MCF 10A (cell line): ENCODE measurements at regions of chr6 and their contacts with region 1.

Region 1: GRCh38 chr6:20564269-20564668 is 30.0 kb downstream of the CDKAL1 start:
- DNase-seq: peak; percentile 17
- H3K4me3 Mint-ChIP-seq: no peak overlapping the region
- H3K27ac Mint-ChIP-seq: no peak overlapping the region
- H3K4me1 Mint-ChIP-seq: peaks cover 14% of the 10 kb centered on the region
- H3K27me3 Mint-ChIP-seq: no peaks in the 10 kb centered on the region
- CTCF ChIP-seq: peak; percentile 34

Region 2: GRCh38 chr6:20582586-20583446 is 18.5 kb after region 1 on chr6:
- CTCF ChIA-PET with region 1: no interaction called
- POLR2A ChIA-PET with region 1: no interaction called
- intact Hi-C with region 1: no loop called
- DNase-seq: no peak
- H3K4me3 Mint-ChIP-seq: no peak overlapping the region
- H3K27ac Mint-ChIP-seq: no peak overlapping the region
- H3K4me1 Mint-ChIP-seq: no peaks in the 10 kb centered on the region
- H3K27me3 Mint-ChIP-seq: no peaks in the 10 kb centered on the region
- CTCF ChIP-seq: no peak

Region 3: GRCh38 chr6:20877008-20877937 is 313.0 kb after region 1 on chr6:
- CTCF ChIA-PET with region 1: interaction called, 5 read pairs
- POLR2A ChIA-PET with region 1: no interaction called
- intact Hi-C with region 1: loop called (anchors 2 kb)
- DNase-seq: peak; percentile 89
- H3K4me3 Mint-ChIP-seq: peak overlapping the region; percentile 5
- H3K27ac Mint-ChIP-seq: peak overlapping the region; percentile 78
- H3K4me1 Mint-ChIP-seq: peaks cover 23% of the 10 kb centered on the region
- H3K27me3 Mint-ChIP-seq: no peaks in the 10 kb centered on the region
- CTCF ChIP-seq: no peak

Region 4: DNA sequence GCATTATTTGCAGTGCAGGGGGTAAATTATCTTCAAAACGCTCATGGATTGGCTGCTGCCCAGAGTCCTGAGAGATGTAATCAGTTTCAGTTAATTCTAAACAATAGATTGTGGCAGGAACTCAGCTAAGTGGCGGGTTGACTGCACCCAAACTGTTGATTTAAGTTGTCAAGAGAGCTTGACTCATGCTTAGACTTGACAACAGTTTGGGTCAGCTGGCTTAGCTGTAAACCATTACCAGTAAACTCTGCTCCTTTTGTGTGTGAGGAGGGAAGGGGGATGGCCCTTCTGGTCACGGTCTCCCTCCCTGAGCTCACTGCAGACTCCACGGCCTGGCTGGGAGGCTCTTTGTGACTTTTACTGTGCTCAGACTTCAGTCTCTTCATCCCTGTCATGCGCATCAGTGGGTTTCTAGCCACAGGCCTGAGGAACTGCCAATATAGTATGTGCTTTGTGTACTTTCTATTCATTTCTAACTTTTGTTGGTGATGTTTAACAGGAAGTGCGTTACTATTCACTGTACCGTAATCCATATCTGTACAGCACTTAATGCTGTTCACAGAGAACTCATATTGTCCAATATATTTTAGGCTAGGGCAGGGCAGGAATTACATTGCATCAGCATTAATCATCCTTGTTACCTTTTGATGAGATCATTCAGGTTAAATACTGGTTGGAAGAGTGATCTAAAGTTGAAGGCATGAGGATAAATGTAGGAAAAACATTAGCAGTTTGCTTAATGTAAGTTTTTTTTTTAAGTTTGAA is 458.3 kb after region 1 on chr6:
- CTCF ChIA-PET with region 1: interaction called, 3 read pairs
- POLR2A ChIA-PET with region 1: no interaction called
- intact Hi-C with region 1: loop called (anchors 10 kb)
- DNase-seq: peak; percentile 69
- H3K4me3 Mint-ChIP-seq: peak overlapping the region; percentile 43
- H3K27ac Mint-ChIP-seq: peak overlapping the region; percentile 96
- H3K4me1 Mint-ChIP-seq: peaks cover 32% of the 10 kb centered on the region
- H3K27me3 Mint-ChIP-seq: no peaks in the 10 kb centered on the region
- CTCF ChIP-seq: no peak

Region 5: GRCh38 chr6:21348504-21349195 is 784.4 kb after region 1 on chr6:
- CTCF ChIA-PET with region 1: no interaction called
- POLR2A ChIA-PET with region 1: no interaction called
- intact Hi-C with region 1: loop called (anchors 5 kb)
- DNase-seq: no peak
- H3K4me3 Mint-ChIP-seq: no peak overlapping the region
- H3K27ac Mint-ChIP-seq: no peak overlapping the region
- H3K4me1 Mint-ChIP-seq: no peaks in the 10 kb centered on the region
- H3K27me3 Mint-ChIP-seq: no peaks in the 10 kb centered on the region
- CTCF ChIP-seq: no peak

Region 6: GRCh38 chr6:21935561-21936028 is 1371.3 kb after region 1 on chr6:
- CTCF ChIA-PET with region 1: interaction called, 3 read pairs
- POLR2A ChIA-PET with region 1: no interaction called
- intact Hi-C with region 1: loop called (anchors 10 kb)
- DNase-seq: peak; percentile 62
- H3K4me3 Mint-ChIP-seq: no peak overlapping the region
- H3K27ac Mint-ChIP-seq: no peak overlapping the region
- H3K4me1 Mint-ChIP-seq: no peaks in the 10 kb centered on the region
- H3K27me3 Mint-ChIP-seq: no peaks in the 10 kb centered on the region
- CTCF ChIP-seq: peak; percentile 32